Cardiac septum (tissue), 1 donor: ENCODE measurements at regions of chr10 and their contacts with region 1.

Region 1: DNA sequence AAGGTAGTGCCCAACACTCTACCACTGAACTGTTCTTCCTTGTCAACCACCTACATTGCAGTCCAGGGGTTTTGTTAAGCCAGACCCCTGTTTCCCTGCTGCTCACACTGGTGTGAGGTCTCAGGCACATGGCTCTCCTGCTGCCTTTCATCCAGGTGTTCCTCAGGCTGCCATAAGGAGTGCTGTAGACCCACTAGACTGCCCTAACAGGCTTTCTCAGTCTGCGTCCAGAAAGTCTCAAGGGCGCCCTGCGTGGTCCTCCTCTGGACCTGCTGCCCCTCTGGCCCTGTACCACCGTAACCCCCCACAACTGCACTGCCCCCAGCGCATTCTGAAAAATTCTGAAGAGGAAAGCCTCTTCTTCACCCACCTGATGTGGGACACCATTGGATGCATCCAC is 225.7 kb upstream of the ANKRD30A start:
- DNase-seq: no peak

Region 2: GRCh38 chr10:36880898-36881297 is 18.8 kb before region 1 on chr10:
- intact Hi-C with region 1: no loop called
- DNase-seq: no peak

Region 3: GRCh38 chr10:36943534-36943933 is 43.9 kb after region 1 on chr10:
- intact Hi-C with region 1: no loop called
- DNase-seq: no peak

Region 4: DNA sequence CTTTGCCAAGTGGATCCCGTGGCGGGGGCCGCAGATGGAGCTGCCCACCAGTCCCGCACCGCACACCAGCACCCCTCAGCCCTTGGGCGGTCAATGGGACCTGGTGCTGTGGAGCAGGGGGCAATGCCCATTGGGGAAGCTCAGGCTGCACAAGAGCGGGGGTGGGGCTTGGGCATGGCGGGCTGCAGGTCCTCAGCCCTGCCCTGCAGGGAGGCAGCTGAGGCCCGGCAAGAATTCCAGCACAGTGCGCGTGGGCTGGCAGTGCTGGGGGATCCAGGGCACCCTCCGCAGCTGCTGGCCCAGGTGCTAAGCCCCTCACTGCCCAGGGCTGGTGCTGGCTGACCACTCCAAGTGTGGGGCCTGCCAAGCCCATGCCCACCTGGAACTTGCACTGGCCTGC is 89.6 kb after region 1 on chr10:
- intact Hi-C with region 1: no loop called
- DNase-seq: no peak

Region 5: DNA sequence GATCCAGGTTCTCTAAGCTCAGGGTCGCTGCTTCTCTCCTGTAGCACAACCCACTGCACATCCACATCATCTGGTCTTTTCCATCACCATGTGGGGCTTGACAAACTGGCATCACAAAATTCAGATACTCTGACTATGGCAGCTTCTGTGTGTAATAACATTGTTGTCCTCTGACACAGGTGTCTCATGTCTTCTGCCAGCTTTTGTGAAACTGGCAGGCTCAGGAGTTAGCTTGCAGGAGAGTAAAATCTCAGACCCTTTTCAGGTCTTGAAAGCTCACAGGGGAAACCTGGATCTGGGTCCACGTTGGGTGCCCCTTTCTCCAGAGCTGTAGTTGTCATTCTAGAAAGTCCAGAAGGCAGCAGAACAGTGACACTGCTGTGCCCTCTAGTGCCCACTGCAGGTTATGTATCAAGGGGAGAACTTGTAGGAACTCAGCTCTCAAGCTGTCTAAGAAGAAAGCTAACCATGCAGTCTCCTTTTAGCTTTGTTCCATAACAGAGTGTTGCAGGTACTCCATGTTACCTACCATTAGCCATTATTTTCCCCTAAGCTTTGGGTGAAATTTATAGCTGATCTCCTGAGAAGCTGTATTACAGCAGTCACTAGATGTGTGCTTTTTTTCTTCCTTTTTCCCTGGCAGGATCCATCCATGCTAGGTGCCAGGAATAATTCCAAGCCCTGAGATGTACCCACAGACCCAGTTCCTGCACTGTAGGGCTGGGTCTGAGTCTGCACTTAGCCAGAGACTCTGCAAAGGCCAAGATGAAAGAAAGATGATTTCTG is 855.1 kb after region 1 on chr10:
- intact Hi-C with region 1: loop called (anchors 10 kb)
- DNase-seq: peak; percentile 53